Aorta (tissue), 5 donors: ENCODE measurements at regions of chr4 and their contacts with region 1.

Region 1: DNA sequence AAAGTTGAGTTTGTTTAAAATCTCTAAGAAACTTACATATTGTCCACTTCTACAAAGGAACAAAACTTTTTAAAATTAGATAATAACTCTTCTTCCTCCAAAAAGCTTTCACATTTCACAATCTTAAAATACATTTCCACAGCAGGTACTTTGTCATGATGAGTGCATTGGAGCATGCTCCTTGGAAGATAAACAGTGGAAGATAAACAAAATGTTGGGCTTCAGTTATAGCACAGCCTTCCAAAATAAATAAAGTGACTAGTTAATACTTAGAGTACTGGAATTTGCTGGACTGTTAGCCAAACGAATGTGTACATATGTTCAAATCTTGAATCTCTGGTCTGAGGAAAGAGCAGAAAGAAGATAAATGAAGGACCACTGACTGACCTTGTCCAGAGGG is 54.9 kb upstream of the PDE5A start:
- DNase-seq: no peak
- ATAC-seq: peak; percentile 79
- H3K4me3 ChIP-seq: no peak overlapping the region
- H3K27ac ChIP-seq: peak overlapping the region in 1 of 2 donors; percentile 67
- H3K4me1 ChIP-seq: peaks cover 8 to 9% of the 10 kb centered on the region in 2 donors
- H3K27me3 ChIP-seq: no peaks in the 10 kb centered on the region

Region 2: DNA sequence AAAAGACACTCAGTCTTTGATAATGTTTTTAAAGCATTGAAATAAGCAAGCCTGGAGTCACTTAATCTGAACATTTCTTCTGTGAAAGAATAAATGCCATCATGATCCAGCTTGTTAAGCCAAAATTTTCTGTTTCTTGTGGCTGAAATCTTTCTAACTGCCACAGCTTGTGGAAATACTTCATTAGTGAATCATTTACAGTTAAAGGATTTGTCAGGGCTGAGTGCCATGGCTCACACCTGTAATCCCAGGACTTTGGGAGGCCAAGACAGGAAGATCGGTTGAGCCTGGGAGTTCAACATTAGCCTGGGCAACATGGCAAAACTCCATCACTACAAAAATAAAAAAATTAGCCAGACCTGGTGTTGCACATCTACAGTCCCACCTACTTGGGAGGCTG is 38.4 kb after region 1 on chr4:
- intact Hi-C with region 1: loop called (anchors 2 to 5 kb)
- DNase-seq: no peak
- ATAC-seq: no peak
- H3K4me3 ChIP-seq: no peak overlapping the region
- H3K27ac ChIP-seq: no peak overlapping the region
- H3K4me1 ChIP-seq: no peaks in the 10 kb centered on the region
- H3K27me3 ChIP-seq: no peaks in the 10 kb centered on the region

Region 3: GRCh38 chr4:120105472-120105871 is 422.0 kb after region 1 on chr4:
- intact Hi-C with region 1: no loop called
- DNase-seq: no peak
- ATAC-seq: no peak
- H3K4me3 ChIP-seq: no peak overlapping the region
- H3K27ac ChIP-seq: no peak overlapping the region
- H3K4me1 ChIP-seq: no peaks in the 10 kb centered on the region
- H3K27me3 ChIP-seq: no peaks in the 10 kb centered on the region